Gastrocnemius medialis (tissue), 4 donors: ENCODE measurements at regions of chr7 and their contacts with region 1.

Region 1: DNA sequence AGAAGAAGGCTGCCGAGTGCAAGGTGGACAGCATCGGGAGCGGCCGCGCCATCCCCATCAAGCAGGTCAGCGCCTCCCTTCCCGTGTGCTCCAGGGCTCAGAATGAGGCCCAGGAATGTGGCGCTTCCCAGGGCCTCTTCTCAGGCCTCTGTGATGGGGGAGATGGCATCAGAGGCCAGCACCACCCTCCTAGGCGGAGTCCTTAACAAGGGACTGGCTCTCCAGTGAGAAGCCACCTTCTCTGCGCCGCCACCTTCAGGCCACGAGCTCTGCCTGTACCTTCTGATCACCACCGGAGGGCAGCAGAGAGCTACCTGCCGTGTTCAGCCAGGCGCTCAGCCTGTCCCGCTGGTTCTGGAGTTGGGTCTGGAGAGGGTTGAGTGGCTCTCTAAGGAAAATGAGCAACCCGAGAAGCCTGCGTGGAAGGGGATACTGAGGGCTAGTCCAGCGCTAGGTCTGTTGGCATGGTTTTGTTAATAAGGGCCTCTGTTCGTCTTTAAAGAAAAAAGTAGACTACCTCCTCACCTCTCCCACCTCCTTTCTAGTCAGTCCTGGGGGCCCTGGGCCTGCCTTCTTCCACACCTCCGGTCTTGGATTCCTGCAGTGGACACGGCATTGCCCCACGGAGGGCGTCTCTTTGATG is 37.7 kb downstream of the AGAP3 start:
- DNase-seq: peak; percentile 66 to 75
- ATAC-seq: peak; percentile 84 to 94
- H3K4me3 ChIP-seq: no peak overlapping the region
- H3K27ac ChIP-seq: no peak overlapping the region
- H3K4me1 ChIP-seq: peaks cover 4 to 22% of the 10 kb centered on the region in 2 donors
- H3K27me3 ChIP-seq: no peaks in the 10 kb centered on the region
- CTCF ChIP-seq: peak; percentile 85 to 98 (median 95)
- POLR2A ChIP-seq: no peak

Region 2: GRCh38 chr7:150852371-150852920 is 271.5 kb before region 1 on chr7 and contains the start of gene AOC1:
- in situ Hi-C with region 1: no loop called
- intact Hi-C with region 1: no loop called
- DNase-seq: no peak
- ATAC-seq: no peak
- H3K4me3 ChIP-seq: no peak within 1 kb of the TSS
- H3K27ac ChIP-seq: no peak within 1 kb of the TSS
- H3K4me1 ChIP-seq: no peaks in the 10 kb centered on the region
- H3K27me3 ChIP-seq: peaks cover 0 to 10% (median 0%) of the 10 kb centered on the region in 3 donors
- CTCF ChIP-seq: no peak
- POLR2A ChIP-seq: no peak
- total RNA-seq, gene AOC1: 1.6 TPM in 1 of 4 donors, not detected in the others

Region 3: GRCh38 chr7:151172273-151173141 is 48.6 kb after region 1 on chr7:
- in situ Hi-C with region 1: loop called in 2 of 4 experiments (anchors 10 kb)
- intact Hi-C with region 1: loop called (anchors 1 kb)
- DNase-seq: peak; percentile 53 to 71
- ATAC-seq: peak; percentile 60 to 79
- H3K4me3 ChIP-seq: no peak overlapping the region
- H3K27ac ChIP-seq: peak overlapping the region in 1 of 4 donors; percentile 33
- H3K4me1 ChIP-seq: peaks cover 3 to 17% of the 10 kb centered on the region in 2 donors
- H3K27me3 ChIP-seq: no peaks in the 10 kb centered on the region
- CTCF ChIP-seq: peak; percentile 99 to 100 (median 100)
- POLR2A ChIP-seq: no peak